ENCODE measurements at regions of chr6 and their contacts with region 1.

Region 1: GRCh38 chr6:11317885-11318771 is 85.7 kb upstream of the NEDD9 start:
- DNase-seq: peak; percentile 99
- H3K4me3 ChIP-seq: no peak overlapping the region
- H3K27ac ChIP-seq: peak overlapping the region; percentile 96
- H3K4me1 ChIP-seq: peaks cover 51% of the 10 kb centered on the region
- H3K27me3 ChIP-seq: no peaks in the 10 kb centered on the region
- CTCF ChIP-seq: no peak

Region 2: GRCh38 chr6:11218538-11219399 is 99.4 kb before region 1 on chr6:
- CTCF ChIA-PET with region 1: no interaction called
- dilution Hi-C with region 1: no loop called
- in situ Hi-C with region 1: no loop called
- intact Hi-C with region 1: no loop called
- DNase-seq: no peak
- H3K4me3 ChIP-seq: no peak overlapping the region
- H3K27ac ChIP-seq: no peak overlapping the region
- H3K4me1 ChIP-seq: peaks cover 30% of the 10 kb centered on the region
- H3K27me3 ChIP-seq: no peaks in the 10 kb centered on the region
- CTCF ChIP-seq: no peak

Region 3: DNA sequence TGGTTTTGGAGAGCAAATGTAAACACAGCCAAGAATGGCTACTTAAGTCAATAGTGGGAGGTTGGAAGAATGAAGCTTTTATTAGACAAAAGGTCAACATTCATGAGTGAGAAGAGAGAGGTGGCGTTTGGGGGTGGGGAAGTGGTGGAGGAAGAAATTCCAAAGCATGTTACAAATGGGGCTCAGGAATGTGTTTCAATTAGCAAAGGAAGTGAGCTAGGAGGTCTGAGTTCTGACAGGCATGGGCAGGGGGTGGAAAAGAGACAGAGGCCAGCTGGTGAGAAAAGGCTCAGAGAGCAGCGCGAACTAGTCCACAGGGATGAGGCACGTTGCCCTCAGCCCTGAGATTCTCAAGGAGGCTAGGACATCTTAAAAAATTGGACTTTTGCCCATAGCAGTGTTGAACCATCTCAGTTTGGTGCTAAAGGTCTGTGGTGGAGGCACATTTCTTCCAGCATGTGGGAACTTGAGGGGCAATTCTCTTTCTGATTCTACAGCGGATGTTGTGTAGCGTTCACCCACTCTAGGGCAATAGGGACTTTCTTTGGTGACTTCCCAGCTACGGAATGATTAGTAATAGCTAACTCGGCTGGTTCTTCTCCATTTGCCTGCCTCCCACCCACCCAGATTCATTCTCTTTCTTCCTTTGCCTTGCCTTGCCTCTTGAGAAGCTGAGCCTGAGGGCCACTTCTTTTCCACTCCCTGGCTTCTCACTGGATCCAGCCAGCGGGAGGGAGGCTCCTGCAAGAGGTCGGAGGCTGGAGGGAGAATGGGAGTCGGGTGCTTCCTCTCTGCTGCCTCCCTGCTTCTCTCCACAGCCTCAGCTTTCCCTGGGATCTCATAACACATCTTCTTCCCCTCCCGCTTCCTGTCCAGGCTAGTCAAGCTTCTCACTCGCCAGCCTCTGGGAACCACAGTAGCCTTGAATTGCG is 40.6 kb before region 1 on chr6:
- CTCF ChIA-PET with region 1: no interaction called
- dilution Hi-C with region 1: no loop called
- in situ Hi-C with region 1: no loop called
- intact Hi-C with region 1: loop called (anchors 5 kb)
- DNase-seq: peak; percentile 73
- H3K4me3 ChIP-seq: no peak overlapping the region
- H3K27ac ChIP-seq: peak overlapping the region; percentile 48
- H3K4me1 ChIP-seq: peaks cover 22% of the 10 kb centered on the region
- H3K27me3 ChIP-seq: no peaks in the 10 kb centered on the region
- CTCF ChIP-seq: no peak

Measured in mammary epithelial cell (primary cell).